IMR-90 (cell line): ENCODE measurements at regions of chr6 and their contacts with region 1.

Region 1: DNA sequence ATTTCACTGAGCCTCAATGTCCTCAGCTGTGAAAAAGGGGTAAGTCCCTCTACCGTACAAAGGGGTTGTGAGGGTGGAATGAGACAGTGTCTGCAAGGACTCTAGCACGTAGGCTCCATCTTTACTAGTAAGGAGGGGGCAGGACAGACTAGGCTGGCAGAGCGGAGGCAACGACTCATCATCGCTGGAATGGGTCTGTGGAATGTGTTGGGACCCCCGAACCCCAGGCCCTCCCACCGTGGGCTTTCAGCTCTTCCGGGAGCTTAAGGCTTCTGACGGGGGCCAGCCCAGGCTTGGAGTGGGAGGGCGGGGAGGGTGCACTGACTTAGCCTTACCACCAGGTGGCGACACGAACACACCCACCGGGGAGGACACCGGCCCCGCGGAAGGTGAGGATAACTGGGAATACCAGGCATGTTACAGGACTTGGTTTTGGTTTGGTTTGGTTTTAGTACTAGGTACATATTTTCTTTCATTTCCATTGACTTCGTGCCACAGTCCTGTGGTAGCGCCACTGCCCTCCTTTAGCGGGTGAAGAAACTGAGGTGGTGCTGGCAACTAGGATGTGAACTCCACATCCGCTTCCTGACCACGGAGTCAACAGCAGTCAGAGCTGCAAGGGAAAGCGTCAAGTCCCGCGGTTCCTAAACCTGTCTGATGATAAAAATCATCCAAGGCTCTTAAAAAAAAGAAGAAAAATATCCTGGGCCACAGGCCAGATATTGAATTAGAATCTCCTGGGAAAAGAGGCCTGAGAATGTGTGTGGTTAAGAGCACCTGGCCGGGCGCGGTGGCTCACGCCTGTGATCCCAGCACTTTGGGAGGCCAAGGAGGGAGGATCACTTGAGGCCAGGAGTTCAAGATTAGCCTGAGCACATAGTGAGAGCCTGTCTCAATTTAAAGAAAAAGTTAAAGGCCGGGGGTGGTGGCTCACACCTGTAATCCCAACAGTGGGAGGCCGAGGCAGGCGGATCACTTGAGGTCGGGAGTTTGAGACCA is 10.3 kb upstream of the TULP1 start:
- DNase-seq: peak; percentile 50
- ATAC-seq: peak; percentile 100
- H3K4me3 ChIP-seq: no peak overlapping the region
- H3K27ac ChIP-seq: no peak overlapping the region
- H3K4me1 ChIP-seq: no peaks in the 10 kb centered on the region
- H3K27me3 ChIP-seq: peaks cover 15% of the 10 kb centered on the region
- CTCF ChIP-seq: peak; percentile 92
- POLR2A ChIP-seq: no peak
- RAD21 ChIP-seq: peak; percentile 93

Region 2: DNA sequence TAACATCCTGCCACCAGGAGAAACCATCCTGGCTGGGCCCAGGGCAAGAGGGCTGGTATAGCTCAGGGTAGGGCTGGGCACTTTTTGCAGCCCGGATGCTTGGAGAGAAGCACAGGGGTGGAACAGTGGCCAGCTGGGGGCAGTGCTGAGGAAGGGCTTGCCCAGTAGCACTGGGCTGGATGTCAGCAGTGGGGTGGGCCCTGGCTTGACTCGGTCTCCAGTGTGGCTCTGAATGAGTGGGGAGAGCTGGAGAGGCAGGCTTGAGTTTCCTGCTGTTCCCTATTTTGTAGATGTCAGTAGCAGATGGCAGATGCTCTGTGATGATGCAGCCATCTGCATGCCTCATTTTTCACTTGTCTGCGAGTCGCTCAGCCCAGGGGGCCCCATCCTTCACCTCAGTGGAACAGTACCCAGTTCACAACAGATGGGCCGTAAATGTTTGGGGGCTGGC is 46.1 kb after region 1 on chr6:
- CTCF ChIA-PET with region 1: no interaction called
- POLR2A ChIA-PET with region 1: no interaction called
- dilution Hi-C with region 1: no loop called
- in situ Hi-C with region 1: loop called (anchors 5 kb)
- intact Hi-C with region 1: no loop called
- DNase-seq: no peak
- ATAC-seq: peak; percentile 44; the same call in 1 of the 2 replicates
- H3K4me3 ChIP-seq: no peak overlapping the region
- H3K27ac ChIP-seq: no peak overlapping the region
- H3K4me1 ChIP-seq: peaks cover 2% of the 10 kb centered on the region; the same call in 1 of the 2 replicates
- H3K27me3 ChIP-seq: peaks cover 16% of the 10 kb centered on the region
- CTCF ChIP-seq: peak; percentile 23; the same call in 1 of the 2 replicates
- POLR2A ChIP-seq: no peak
- RAD21 ChIP-seq: no peak

Region 3: DNA sequence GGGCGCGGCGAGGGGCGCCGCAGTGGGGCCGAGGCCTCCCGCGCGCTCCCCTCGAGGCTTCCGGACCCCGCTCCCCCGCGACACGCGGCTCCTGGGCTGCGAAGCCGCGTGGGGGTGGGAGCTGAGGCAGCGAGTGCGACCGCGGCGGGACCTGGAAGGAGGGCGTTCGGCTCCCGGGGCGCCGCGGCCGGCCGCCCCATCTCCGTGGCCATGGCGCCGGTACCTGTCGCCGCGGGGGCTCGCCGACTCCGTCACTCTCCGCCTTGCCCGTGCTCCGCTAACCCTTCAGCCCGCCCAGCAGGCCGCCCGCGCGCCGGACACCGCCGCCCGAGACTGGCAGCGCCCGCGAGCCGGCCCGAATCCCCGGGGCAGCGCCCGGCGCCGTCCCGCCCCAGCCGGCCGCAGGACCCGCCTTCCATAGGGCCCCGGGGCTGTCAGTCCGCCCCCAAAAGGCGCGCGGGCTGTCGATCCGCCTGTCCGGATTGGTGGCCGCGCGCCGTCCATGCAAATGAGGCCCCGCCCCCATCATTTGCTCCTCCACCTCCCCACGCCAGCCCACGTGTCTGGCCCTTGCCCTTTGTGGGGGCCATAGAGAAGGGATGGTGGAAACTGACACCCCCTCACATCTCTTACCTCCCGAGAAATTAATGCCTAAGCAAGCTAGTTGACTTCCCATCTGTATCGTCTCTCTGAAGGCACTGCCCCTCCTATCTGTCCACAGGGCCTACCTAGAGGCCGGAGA is 165.8 kb after region 1 on chr6 and contains the start of gene FKBP5:
- CTCF ChIA-PET with region 1: interaction called, 3 read pairs
- POLR2A ChIA-PET with region 1: no interaction called
- dilution Hi-C with region 1: no loop called
- in situ Hi-C with region 1: no loop called
- intact Hi-C with region 1: loop called (anchors 1 kb)
- DNase-seq: peak; percentile 80
- ATAC-seq: peak; percentile 99
- H3K4me3 ChIP-seq: peak within 1 kb of the TSS; percentile 59
- H3K27ac ChIP-seq: peak within 1 kb of the TSS; percentile 13; the same call in 1 of the 2 replicates
- H3K4me1 ChIP-seq: peaks cover 2% of the 10 kb centered on the region; the same call in 1 of the 2 replicates
- H3K27me3 ChIP-seq: no peaks in the 10 kb centered on the region
- CTCF ChIP-seq: no peak
- POLR2A ChIP-seq: peak; percentile 70
- RAD21 ChIP-seq: no peak
- total RNA-seq, gene FKBP5: 7.0 and 10.0 TPM in 2 replicates

Region 4: DNA sequence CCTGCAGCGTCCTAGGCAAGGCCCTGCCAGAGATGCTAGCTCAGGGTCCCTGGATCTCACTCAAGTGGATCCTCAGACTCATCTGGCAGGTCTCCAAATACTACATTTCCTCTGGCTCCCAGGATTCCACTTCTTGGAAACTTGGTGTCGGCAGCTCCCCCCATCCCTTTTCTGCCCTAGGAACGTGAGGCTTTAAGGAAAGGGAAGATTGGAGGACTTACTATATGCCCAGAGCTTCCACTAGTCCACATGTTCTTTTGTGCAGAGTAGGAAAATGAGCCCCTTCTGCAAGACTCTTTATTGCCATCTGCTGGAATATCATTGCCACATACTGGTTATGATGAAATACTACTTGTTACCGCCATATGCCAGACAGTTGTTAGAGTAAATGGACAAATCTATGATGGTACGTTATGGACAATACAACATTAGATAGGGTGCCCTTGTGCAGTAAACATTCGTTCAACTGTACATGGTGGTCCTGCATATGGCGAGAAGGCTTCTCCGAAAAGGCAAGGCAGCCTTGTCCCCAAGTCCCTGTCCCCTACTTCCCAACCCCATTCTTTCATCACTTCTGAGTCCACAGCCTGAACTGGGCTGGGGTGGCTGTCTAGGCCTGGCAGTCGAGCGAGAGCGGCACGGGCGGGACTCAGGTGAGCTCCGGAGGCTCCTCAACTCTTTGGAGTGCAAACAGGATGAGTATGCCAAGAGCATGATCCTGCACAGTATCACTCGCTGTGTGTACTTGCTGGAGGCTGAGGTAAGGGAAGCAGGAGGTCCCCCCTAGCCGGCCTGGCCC is 214.7 kb after region 1 on chr6:
- CTCF ChIA-PET with region 1: interaction called, 6 read pairs
- POLR2A ChIA-PET with region 1: no interaction called
- dilution Hi-C with region 1: no loop called
- in situ Hi-C with region 1: loop called (anchors 5 kb)
- intact Hi-C with region 1: loop called (anchors 1 kb)
- DNase-seq: peak; percentile 87
- ATAC-seq: peak; percentile 87
- H3K4me3 ChIP-seq: no peak overlapping the region
- H3K27ac ChIP-seq: no peak overlapping the region
- H3K4me1 ChIP-seq: no peaks in the 10 kb centered on the region
- H3K27me3 ChIP-seq: peaks cover 1% of the 10 kb centered on the region; the same call in 1 of the 2 replicates
- CTCF ChIP-seq: peak; percentile 91
- POLR2A ChIP-seq: no peak
- RAD21 ChIP-seq: peak; percentile 93

Region 5: GRCh38 chr6:36094753-36095496 is 572.0 kb after region 1 on chr6:
- CTCF ChIA-PET with region 1: no interaction called
- POLR2A ChIA-PET with region 1: no interaction called
- dilution Hi-C with region 1: no loop called
- in situ Hi-C with region 1: no loop called
- intact Hi-C with region 1: loop called (anchors 5 kb)
- DNase-seq: peak; percentile 71
- ATAC-seq: peak; percentile 96
- H3K4me3 ChIP-seq: no peak overlapping the region
- H3K27ac ChIP-seq: no peak overlapping the region
- H3K4me1 ChIP-seq: peaks cover 2% of the 10 kb centered on the region; the same call in 1 of the 2 replicates
- H3K27me3 ChIP-seq: no peaks in the 10 kb centered on the region
- CTCF ChIP-seq: peak; percentile 95
- POLR2A ChIP-seq: peak; percentile 51; the same call in 1 of the 2 replicates
- RAD21 ChIP-seq: peak; percentile 94